Right ventricle myocardium superior (tissue), 1 donor: ENCODE measurements at regions of chr2 and their contacts with region 1.

Region 1: DNA sequence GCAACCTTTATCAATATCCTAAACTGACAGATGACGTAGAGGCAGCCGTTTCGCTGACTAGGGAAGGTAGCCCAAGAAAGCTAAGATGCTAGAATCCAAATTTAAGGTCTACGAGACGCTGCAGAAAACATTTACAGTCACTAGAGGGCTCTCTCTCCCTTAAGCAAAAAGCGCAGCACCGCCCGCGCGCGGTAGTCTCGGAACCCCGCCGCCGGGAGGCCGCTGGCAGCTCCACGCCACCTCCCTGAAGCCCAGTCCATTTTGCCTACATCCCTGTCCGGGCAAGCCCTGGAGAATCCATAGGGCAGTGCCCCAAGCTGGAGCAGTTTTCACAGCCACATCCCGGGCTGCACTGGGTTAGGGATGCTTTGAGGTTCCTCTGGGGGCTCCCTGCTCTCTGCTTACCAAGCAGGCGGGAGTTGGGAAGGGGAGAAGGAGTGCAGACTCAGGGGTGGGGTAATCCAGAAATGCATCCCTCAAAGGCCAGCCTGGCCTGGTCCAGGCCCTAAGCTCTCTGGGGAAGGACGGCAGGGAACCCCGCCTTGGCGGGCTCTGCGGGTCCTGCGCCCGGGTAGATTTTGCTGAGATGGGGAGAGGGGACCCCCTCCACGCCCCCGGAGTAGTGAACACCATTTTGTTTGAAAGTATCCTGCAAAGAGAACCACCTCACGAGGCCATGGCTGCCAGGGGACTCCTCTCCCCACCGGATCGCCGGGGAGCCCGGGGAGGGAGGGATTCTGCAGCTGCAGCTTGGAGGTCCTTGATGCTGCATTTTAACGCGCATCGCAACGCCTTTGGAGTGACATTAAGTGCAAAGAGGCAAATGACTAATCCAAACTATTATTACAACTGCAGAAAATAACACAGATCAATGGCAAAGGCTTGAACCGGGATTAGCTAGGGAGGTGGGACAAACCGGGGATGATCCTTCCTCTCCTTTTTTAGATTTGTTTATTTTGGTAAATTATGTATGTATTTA is 1.3 kb upstream of the DPYSL5 start:
- DNase-seq: peak; percentile 81
- ATAC-seq: peak; percentile 88

Region 2: DNA sequence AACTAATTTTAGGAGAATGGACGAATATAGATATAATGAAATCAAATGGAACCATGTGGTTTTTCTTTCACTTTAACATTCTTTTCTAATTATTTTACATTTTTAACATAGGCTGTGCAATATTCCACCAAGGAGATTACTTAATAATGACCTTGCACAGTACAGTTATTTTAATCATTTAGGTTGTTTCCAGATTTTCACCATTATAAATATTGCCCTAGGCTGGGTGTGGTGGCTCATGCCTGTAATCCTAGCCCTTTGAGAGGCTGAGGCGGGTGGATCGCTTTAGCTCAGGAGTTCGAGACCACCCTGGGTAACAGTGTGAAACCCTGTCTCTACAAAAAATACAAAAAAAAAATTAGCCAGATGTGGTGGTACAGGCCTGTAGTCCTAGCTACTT is 459.4 kb before region 1 on chr2:
- intact Hi-C with region 1: no loop called
- DNase-seq: no peak
- ATAC-seq: no peak

Region 3: GRCh38 chr2:26922405-26923188 is 76.0 kb after region 1 on chr2:
- intact Hi-C with region 1: loop called (anchors 5 kb)
- DNase-seq: peak; percentile 48
- ATAC-seq: peak; percentile 83

Region 4: GRCh38 chr2:26942543-26943295 is 96.1 kb after region 1 on chr2:
- intact Hi-C with region 1: loop called (anchors 5 kb)
- DNase-seq: peak; percentile 82
- ATAC-seq: peak; percentile 51